ENCODE measurements at regions of chr11 and their contacts with region 1.

Region 1: GRCh38 chr11:62542750-62543567 is 3.6 kb downstream of the AHNAK start:
- DNase-seq: peak; percentile 75
- H3K4me3 ChIP-seq: peak overlapping the region in 2 of 3 experiments; percentile 53 to 55
- H3K27ac ChIP-seq: peak overlapping the region; percentile 12
- H3K4me1 ChIP-seq: peaks cover 64% of the 10 kb centered on the region
- H3K27me3 ChIP-seq: no peaks in the 10 kb centered on the region
- CTCF ChIP-seq: peak; percentile 98 to 100
- POLR2A ChIP-seq: no peak

Region 2: DNA sequence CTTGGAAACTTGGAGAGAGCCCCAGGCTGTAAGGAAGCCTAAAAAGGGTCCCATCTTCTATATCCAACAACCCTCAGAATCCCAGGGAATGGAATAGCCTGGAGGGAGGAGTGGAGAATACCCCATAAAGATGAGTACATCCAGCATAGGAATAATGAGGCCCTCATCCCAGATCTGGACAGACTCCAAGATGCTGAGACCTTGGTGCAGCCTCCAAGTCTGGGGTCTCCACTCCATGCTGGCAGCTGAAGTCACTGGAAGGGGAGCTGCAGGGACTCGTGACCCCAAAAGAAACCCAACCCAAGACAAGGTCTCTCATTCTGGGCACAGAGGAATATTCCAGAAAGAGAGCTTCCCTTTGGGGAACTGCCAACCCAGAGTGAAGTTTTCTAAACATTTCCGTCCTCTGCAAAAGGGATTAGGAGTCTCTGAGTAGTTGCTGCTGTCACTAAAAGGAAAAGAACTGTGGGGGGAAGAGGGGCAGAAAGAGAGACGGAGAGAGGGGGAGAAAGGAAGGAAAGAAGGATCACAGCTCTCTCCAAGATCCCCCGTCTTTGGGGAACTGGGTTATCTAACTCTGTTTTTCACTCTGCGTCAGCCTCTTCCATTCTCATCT is 123.5 kb before region 1 on chr11:
- CTCF ChIA-PET with region 1: interaction called, 377 read pairs
- POLR2A ChIA-PET with region 1: interaction called, 10 read pairs
- dilution Hi-C with region 1: no loop called
- intact Hi-C with region 1: loop called (anchors 1 kb)
- DNase-seq: no peak
- H3K4me3 ChIP-seq: no peak overlapping the region
- H3K27ac ChIP-seq: no peak overlapping the region
- H3K4me1 ChIP-seq: no peaks in the 10 kb centered on the region
- H3K27me3 ChIP-seq: peaks cover 3 to 6% of the 10 kb centered on the region in 2 experiments
- CTCF ChIP-seq: no peak
- POLR2A ChIP-seq: no peak

Region 3: GRCh38 chr11:62449451-62449851 is 93.5 kb before region 1 on chr11:
- CTCF ChIA-PET with region 1: interaction called, 17 read pairs
- POLR2A ChIA-PET with region 1: no interaction called
- dilution Hi-C with region 1: no loop called
- intact Hi-C with region 1: no loop called
- DNase-seq: no peak
- H3K4me3 ChIP-seq: no peak overlapping the region
- H3K27ac ChIP-seq: no peak overlapping the region
- H3K4me1 ChIP-seq: no peaks in the 10 kb centered on the region
- H3K27me3 ChIP-seq: no peaks in the 10 kb centered on the region
- CTCF ChIP-seq: no peak
- POLR2A ChIP-seq: no peak

Region 4: DNA sequence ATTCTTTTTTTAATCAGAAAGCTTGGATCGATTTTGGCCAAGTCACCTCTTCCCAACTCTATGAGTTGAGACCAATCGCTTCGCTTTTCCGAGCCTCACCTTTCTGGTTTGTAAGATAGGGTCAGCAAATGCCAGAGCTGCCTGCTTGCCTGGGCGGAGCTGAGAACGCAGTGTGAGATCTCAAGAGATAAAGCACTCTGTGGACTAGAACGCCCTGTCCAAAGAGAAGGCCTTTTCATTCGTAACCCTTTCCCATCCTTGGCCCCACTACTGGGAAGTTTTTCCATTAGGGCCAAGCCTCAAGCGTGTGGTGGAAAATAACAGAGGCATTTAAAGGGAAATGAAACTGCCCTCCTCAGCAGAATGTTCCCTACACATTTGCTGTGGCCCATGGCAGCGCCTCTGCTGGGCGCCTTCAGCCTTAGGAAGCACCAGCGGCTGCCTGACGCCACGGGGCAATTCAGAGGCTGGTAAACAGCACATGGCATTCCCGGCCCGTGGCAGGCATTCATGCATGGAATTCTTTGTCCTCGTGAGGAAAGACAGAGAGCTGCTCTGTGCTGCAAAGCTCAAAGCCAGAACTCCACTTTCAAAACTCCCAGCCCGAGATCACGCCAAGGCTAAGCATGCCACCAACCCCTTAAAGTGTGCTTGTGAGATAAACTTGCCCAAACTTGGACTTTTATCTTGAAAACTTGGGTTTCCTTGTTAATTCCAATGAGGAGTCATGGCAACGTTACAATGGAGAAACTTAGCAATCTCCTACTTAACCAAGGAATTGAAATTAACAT is 34.5 kb before region 1 on chr11:
- CTCF ChIA-PET with region 1: interaction called, 28 read pairs
- POLR2A ChIA-PET with region 1: interaction called, 5 read pairs
- dilution Hi-C with region 1: no loop called
- intact Hi-C with region 1: loop called (anchors 2 kb)
- DNase-seq: peak; percentile 86
- H3K4me3 ChIP-seq: peak overlapping the region in 1 of 3 experiments; percentile 16
- H3K27ac ChIP-seq: no peak overlapping the region
- H3K4me1 ChIP-seq: peaks cover 3% of the 10 kb centered on the region
- H3K27me3 ChIP-seq: no peaks in the 10 kb centered on the region
- CTCF ChIP-seq: peak; percentile 69 to 81
- POLR2A ChIP-seq: no peak

Region 5: DNA sequence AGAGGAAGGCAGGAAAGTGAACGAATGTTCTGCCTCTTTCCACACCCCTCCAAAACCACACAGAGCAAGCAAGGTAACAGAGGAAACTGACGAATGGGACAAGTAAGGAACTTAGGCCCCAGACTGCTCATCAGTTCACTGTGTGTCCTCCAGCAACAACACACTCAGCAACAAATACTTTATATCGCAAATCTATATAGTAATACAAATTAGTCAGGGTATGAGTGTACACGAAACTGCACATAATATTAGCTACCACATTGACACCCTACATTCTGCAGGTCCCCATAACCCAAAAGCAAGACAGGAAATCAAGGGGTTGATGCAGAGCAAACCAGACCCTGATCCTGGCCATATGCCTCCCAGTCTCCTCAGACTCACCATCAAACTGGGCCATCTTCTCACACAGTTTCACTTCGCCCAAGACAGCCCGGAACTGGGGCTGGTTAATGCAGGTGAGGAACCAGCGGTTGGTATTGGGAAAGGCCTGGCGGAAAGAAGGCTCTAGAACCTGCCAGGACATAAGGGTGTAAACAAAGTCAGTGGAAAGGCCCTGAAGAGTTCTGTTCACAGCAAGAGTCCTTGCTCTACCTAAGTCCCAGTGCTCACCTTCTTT is 24.2 kb after region 1 on chr11:
- CTCF ChIA-PET with region 1: interaction called, 376 read pairs
- POLR2A ChIA-PET with region 1: no interaction called
- dilution Hi-C with region 1: no loop called
- intact Hi-C with region 1: no loop called
- DNase-seq: no peak
- H3K4me3 ChIP-seq: no peak overlapping the region
- H3K27ac ChIP-seq: no peak overlapping the region
- H3K4me1 ChIP-seq: peaks cover 15% of the 10 kb centered on the region
- H3K27me3 ChIP-seq: no peaks in the 10 kb centered on the region
- CTCF ChIP-seq: no peak
- POLR2A ChIP-seq: no peak

Region 6: DNA sequence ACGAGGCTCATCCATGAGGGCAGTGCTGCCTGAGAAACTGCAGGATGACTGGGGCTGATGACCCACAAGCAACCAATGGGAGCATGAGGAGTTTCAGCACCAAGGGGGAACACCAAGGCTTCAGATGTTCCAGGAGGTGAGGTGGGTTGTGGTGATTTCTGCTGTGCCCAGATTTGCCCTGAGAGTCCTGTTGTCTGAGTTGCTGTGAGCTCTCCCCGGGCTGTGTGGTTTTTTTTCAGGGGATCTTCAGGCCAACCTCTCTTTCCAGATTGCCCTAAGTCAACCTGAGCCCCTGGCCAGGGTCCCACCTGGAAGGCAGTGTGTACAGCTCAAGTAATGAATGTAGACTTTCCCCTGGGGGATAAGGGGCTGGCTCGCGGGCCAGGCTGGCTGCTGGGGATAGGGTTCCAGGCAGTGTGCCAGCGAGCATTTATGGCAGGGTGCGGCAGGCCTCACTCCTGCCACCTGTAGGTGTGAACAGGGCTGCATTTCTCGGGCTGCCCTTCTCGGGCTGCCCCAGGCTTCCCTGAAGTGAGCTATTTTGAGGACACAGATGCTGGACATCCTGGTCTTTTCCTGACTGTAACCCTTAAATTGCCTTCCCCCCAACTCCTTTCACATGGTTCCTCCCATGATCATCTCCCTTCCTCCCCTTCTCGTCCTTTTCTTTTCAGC is 432.0 kb after region 1 on chr11:
- CTCF ChIA-PET with region 1: no interaction called
- POLR2A ChIA-PET with region 1: no interaction called
- dilution Hi-C with region 1: no loop called
- intact Hi-C with region 1: no loop called
- DNase-seq: peak; percentile 15
- H3K4me3 ChIP-seq: no peak overlapping the region
- H3K27ac ChIP-seq: no peak overlapping the region
- H3K4me1 ChIP-seq: no peaks in the 10 kb centered on the region
- H3K27me3 ChIP-seq: no peaks in the 10 kb centered on the region
- CTCF ChIP-seq: peak; percentile 28 to 56
- POLR2A ChIP-seq: no peak

Measured in endothelial cell of umbilical vein (primary cell).